ENCODE measurements at regions of chr17 and their contacts with region 1.

Region 1: DNA sequence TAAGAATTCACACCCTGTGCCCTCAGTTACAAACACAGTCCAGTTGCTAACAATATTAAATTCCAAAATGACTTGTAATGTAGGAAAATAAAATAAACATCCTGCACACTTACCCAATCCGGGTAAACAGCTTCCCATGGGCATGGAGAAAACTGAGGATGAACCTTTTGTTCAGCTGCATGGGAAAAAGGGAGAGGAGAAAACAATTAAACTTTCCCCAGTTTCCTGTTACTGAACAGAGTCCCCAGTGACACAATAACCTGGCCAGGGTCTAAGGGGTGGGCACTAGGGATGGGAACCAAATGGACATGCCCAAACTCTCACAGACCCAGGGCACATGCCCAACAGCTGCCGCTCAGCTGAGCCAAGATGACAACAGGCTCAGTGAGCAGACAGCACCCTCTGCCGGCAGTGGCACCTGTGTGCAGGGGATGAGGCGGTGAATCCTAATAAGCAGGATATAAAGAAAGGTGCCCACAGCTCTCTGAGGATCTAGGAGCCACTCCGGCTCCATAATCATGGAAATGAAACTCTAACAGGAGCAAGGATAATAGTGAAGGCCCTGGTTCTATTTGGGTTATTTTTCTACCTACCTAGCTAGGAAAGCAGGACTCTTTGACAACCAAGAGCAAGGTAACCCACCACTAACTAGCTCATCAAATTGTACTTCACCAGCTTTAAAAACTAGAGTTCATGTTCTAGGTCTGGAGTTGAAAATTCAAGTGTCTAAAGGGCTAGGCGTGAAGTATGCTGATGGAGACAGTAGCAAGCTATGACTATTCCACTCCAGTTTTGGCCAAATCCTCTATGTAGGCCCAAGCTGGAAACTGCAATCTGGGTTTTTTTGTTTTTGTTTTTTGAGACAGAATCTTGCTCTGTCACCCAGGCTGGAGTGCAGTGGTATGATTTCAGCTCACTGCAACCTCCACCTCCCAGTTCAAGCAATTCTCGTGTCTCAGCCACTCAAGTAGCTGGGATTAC is 58.8 kb downstream of the SMG6 start:
- DNase-seq: peak; percentile 92
- ATAC-seq: peak; percentile 84
- H3K4me3 ChIP-seq: no peak overlapping the region
- H3K27ac ChIP-seq: peak overlapping the region; percentile 93
- H3K4me1 ChIP-seq: peaks cover 19% of the 10 kb centered on the region
- H3K27me3 ChIP-seq: no peaks in the 10 kb centered on the region
- CTCF ChIP-seq: peak; percentile 99
- POLR2A ChIP-seq: peak; percentile 59; the same call in 1 of the 2 replicates
- RAD21 ChIP-seq: peak; percentile 99

Region 2: DNA sequence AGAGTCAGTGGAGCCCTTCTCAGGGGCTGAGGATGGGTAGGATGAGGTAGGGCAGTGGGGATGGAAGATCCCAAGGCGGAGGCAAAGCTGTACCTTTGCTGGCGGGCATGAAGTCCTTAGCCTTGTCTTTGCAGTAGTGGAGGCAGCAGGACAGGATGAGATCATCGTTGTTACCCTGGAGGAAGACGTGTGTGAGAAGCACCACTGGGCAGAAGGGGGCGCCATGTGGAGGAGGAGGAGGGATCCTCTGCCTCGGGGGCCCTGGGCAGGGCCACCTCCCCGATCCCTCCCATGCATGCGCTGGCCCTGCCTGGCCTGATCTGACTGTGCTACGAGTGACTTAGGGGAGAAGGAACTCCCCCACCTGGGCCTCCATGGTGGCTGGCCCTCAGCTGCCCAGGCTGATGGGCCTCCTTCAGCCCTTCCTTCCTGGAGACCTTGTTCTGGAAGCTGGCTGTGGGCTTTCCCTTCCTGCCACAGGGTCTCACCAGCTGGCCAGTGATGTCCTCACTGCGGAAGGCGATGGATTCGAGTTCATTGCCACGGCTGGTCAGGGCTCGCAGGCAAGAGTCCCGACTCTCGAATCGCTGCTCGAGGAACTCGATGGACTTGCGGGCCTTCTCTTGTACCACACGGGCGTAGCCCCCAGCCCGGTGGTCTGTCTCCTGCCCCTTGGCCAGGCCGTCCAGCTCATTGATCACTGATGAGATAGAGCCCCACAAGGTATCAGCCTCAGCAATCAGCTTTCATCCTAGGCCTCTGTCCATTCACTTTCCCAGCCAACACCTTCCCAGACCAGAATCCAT is 179.7 kb before region 1 on chr17:
- CTCF ChIA-PET with region 1: interaction called, 57 read pairs
- POLR2A ChIA-PET with region 1: no interaction called
- dilution Hi-C with region 1: no loop called
- in situ Hi-C with region 1: loop called (anchors 5 kb)
- intact Hi-C with region 1: loop called (anchors 1 kb)
- DNase-seq: peak; percentile 68
- ATAC-seq: no peak
- H3K4me3 ChIP-seq: no peak overlapping the region
- H3K27ac ChIP-seq: peak overlapping the region; percentile 92
- H3K4me1 ChIP-seq: peaks cover 74% of the 10 kb centered on the region
- H3K27me3 ChIP-seq: no peaks in the 10 kb centered on the region
- CTCF ChIP-seq: peak; percentile 60
- POLR2A ChIP-seq: no peak
- RAD21 ChIP-seq: peak; percentile 53

Region 3: GRCh38 chr17:2094891-2095535 is 149.8 kb before region 1 on chr17:
- CTCF ChIA-PET with region 1: interaction called, 22 read pairs
- POLR2A ChIA-PET with region 1: no interaction called
- dilution Hi-C with region 1: no loop called
- in situ Hi-C with region 1: no loop called
- intact Hi-C with region 1: loop called (anchors 1 kb)
- DNase-seq: peak; percentile 75
- ATAC-seq: peak; percentile 65
- H3K4me3 ChIP-seq: no peak overlapping the region
- H3K27ac ChIP-seq: no peak overlapping the region
- H3K4me1 ChIP-seq: peaks cover 11% of the 10 kb centered on the region
- H3K27me3 ChIP-seq: no peaks in the 10 kb centered on the region
- CTCF ChIP-seq: peak; percentile 70
- POLR2A ChIP-seq: 0 out of 2 replicates have a peak, but pooled peaks have one; percentile 40
- RAD21 ChIP-seq: peak; percentile 91

Region 4: GRCh38 chr17:2172077-2172851 is 72.6 kb before region 1 on chr17:
- CTCF ChIA-PET with region 1: interaction called, 6 read pairs
- POLR2A ChIA-PET with region 1: no interaction called
- dilution Hi-C with region 1: no loop called
- in situ Hi-C with region 1: loop called (anchors 5 kb)
- intact Hi-C with region 1: loop called (anchors 1 kb)
- DNase-seq: peak; percentile 99
- ATAC-seq: peak; percentile 60
- H3K4me3 ChIP-seq: peak overlapping the region; percentile 15; the same call in 1 of the 2 replicates
- H3K27ac ChIP-seq: peak overlapping the region; percentile 99
- H3K4me1 ChIP-seq: peaks cover 50% of the 10 kb centered on the region
- H3K27me3 ChIP-seq: no peaks in the 10 kb centered on the region
- CTCF ChIP-seq: no peak
- POLR2A ChIP-seq: no peak; the same call in 1 of the 2 replicates
- RAD21 ChIP-seq: peak; percentile 40

Region 5: GRCh38 chr17:2369551-2370210 is 124.8 kb after region 1 on chr17:
- CTCF ChIA-PET with region 1: no interaction called
- POLR2A ChIA-PET with region 1: no interaction called
- dilution Hi-C with region 1: no loop called
- in situ Hi-C with region 1: no loop called
- intact Hi-C with region 1: no loop called
- DNase-seq: no peak
- ATAC-seq: no peak
- H3K4me3 ChIP-seq: no peak overlapping the region
- H3K27ac ChIP-seq: no peak overlapping the region
- H3K4me1 ChIP-seq: no peaks in the 10 kb centered on the region
- H3K27me3 ChIP-seq: no peaks in the 10 kb centered on the region
- CTCF ChIP-seq: no peak
- POLR2A ChIP-seq: no peak
- RAD21 ChIP-seq: no peak

Measured in IMR-90 (cell line).